Activated naive CD4-positive, alpha-beta T cell treated with anti-CD3 and anti-CD28 coated beads for 36 hours (primary cell): ENCODE measurements at regions of chr3 and their contacts with region 1.

Region 1: DNA sequence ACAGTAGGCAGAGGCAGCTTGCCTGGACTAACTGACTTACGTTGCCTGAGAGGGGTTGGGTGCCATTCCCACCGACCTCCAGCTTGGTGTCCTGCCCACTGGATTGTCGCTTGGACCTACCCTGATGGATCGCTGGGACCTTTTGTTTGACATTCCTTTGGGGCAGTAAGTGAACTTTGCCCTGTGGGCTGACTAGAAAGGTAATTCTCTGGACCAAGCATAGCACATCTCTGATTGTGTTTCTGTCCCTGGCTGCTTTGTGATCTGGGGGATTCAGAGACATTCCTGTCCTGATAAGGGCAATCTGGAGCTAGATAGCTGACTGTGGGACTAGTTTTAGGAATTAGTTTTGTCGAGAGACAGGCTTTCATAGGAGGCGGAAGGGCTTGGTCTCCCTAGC is 19.5 kb upstream of the IFT57 start:
- DNase-seq: no peak
- H3K4me3 Mint-ChIP-seq: no peak overlapping the region
- H3K27ac Mint-ChIP-seq: no peak overlapping the region
- H3K4me1 Mint-ChIP-seq: peaks cover 13% of the 10 kb centered on the region
- H3K27me3 Mint-ChIP-seq: peaks cover 1% of the 10 kb centered on the region

Region 2: GRCh38 chr3:108228286-108228685 is 13.4 kb before region 1 on chr3:
- CTCF ChIA-PET with region 1: no interaction called
- intact Hi-C with region 1: loop called (anchors 2 kb)
- DNase-seq: no peak
- H3K4me3 Mint-ChIP-seq: no peak overlapping the region
- H3K27ac Mint-ChIP-seq: no peak overlapping the region
- H3K4me1 Mint-ChIP-seq: peaks cover 22% of the 10 kb centered on the region
- H3K27me3 Mint-ChIP-seq: no peaks in the 10 kb centered on the region